ENCODE measurements at regions of chr9 and their contacts with region 1.

Region 1: DNA sequence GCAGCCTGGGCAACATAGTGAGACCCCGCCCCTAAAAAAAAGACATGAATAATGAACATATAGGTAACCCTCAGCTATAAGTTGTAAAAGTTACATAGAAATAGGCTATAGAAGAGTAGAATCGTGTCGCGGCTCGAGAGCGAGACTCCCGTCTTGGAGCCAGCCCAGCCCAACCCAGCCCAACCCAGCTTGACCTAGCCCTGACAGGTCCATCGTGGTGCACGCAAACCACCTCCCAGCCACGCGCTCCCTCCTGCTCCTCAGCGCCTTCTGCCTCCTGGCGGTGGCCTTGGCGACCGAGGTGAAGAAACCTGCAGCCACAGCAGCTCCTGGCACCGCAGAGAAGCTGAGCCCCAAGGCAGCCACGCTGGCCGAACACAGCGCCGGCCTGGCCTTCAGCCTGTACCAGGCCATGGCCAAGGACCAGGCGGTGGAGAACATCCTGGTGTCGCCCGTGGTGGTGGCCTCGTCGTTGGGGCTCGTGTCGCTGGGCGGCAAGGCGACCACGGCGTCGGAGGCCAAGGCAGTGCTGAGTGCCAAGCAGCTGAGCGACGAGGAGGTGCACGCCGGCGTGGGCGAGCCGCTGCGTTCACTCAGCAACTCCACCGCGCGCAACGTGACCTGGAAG is 10.8 kb downstream of the KIF24 start:
- DNase-seq: no peak
- H3K27ac ChIP-seq: no peak overlapping the region
- CTCF ChIP-seq: no peak

Region 2: DNA sequence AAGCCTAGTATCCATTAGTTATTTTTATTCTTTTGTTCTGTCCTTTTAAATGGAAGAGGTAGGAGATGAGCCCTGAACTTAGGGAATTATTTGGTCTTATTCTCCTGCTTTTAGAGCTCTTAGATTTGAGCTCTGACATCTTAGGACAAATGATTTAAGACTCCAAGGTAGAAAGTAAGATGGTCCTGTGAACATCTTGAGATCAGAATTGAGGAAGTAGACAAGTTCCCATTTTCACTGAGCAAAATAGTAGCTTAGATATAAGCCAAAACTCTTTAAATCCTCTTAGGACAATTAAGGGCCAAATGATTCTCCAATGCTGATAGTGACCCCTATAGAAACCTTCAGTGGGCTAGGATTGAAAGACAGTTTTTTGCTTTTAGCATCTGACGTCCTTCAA is 1118.7 kb after region 1 on chr9:
- CTCF ChIA-PET with region 1: interaction called, 12 read pairs
- POLR2A ChIA-PET with region 1: no interaction called
- DNase-seq: no peak
- H3K27ac ChIP-seq: no peak overlapping the region
- CTCF ChIP-seq: no peak